Endothelial cell of umbilical vein (primary cell): ENCODE measurements at regions of chrX and their contacts with region 1.

Region 1: GRCh38 chrX:45749375-45749774 is 548.7 kb upstream of the DIPK2B start:
- DNase-seq: peak; percentile 43
- H3K4me3 ChIP-seq: no peak overlapping the region
- H3K27ac ChIP-seq: peak overlapping the region; percentile 26
- H3K4me1 ChIP-seq: peaks cover 45% of the 10 kb centered on the region
- H3K27me3 ChIP-seq: no peaks in the 10 kb centered on the region
- CTCF ChIP-seq: no peak
- POLR2A ChIP-seq: no peak

Region 2: DNA sequence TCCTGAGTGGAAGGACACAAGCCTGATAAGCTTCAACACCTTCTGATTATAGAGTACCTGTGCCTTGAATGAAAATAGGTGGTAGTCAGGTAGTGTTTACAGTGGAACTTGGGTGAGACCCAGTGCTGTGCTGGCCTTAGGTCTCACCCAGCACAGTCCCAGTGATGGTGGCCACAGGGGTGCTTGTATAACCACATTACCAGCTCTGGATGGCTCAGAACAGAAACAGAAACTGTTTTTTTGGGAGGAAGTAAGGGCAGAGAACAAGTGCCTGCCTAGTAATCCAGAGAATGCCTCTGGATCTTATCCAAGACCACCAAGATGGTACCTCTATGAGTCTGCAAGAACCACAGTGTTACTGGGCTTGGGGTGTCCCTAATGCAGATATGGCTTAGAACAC is 377.2 kb before region 1 on chrX:
- CTCF ChIA-PET with region 1: no interaction called
- POLR2A ChIA-PET with region 1: no interaction called
- dilution Hi-C with region 1: no loop called
- intact Hi-C with region 1: no loop called
- DNase-seq: no peak
- H3K4me3 ChIP-seq: no peak overlapping the region
- H3K27ac ChIP-seq: no peak overlapping the region
- H3K4me1 ChIP-seq: no peaks in the 10 kb centered on the region
- H3K27me3 ChIP-seq: no peaks in the 10 kb centered on the region
- CTCF ChIP-seq: no peak
- POLR2A ChIP-seq: no peak

Region 3: DNA sequence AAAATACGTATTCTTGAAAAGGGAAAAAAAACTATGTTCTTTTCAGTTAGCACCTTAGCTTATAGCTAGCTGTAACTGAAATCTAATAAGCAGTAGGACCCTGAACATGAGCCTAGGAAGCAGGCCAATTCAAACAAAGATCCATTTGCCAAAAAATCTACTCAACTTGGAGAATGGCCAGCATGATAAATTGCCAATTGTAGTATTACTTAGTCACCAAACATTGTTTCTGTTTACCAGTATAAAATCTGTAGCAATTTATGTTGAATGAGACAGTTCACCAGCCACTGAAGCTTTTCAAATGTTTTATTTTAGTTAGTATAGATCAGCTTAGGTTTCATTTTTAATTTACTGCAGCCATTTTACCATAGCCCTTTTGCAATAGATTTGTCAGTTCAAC is 225.1 kb before region 1 on chrX:
- CTCF ChIA-PET with region 1: no interaction called
- POLR2A ChIA-PET with region 1: no interaction called
- dilution Hi-C with region 1: no loop called
- intact Hi-C with region 1: loop called (anchors 1 kb)
- DNase-seq: peak; percentile 65
- H3K4me3 ChIP-seq: no peak overlapping the region
- H3K27ac ChIP-seq: no peak overlapping the region
- H3K4me1 ChIP-seq: peaks cover 4% of the 10 kb centered on the region
- H3K27me3 ChIP-seq: no peaks in the 10 kb centered on the region
- CTCF ChIP-seq: no peak
- POLR2A ChIP-seq: no peak

Region 4: DNA sequence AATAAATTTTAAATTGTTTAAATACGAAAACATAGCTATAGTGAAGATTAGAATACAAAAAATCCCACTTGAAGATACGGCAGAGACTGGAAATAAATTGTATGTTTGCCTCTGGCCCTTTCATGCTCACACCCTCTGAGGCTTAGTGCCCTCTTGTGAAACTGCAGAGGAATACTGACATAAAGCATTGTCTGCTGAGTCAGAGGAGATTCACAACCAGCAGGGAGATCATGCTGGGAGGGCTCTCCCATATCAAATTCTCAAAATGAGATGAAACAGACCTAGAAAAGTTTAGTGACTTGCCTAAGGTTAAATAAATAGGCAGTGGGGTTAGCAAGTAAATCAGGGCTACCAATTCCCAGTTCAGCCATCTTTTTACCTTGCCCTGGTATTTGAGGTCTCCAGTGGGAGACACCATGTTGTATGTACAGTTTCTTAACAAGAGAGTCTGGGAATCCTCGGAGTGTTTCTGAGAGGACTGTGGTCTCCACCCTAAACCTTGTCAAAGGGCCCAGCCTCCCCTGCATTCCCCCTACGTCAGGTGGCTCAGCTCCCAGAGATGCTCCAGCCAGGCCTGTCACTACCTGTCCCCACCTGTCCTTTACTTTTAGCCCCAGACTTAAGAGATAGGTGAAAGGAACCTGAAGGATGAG is 32.7 kb after region 1 on chrX:
- CTCF ChIA-PET with region 1: no interaction called
- POLR2A ChIA-PET with region 1: no interaction called
- dilution Hi-C with region 1: no loop called
- intact Hi-C with region 1: no loop called
- DNase-seq: peak; percentile 43
- H3K4me3 ChIP-seq: no peak overlapping the region
- H3K27ac ChIP-seq: no peak overlapping the region
- H3K4me1 ChIP-seq: peaks cover 8% of the 10 kb centered on the region
- H3K27me3 ChIP-seq: no peaks in the 10 kb centered on the region
- CTCF ChIP-seq: peak in 1 of 2 donors; percentile 3
- POLR2A ChIP-seq: no peak

Region 5: GRCh38 chrX:45879512-45879911 is 130.1 kb after region 1 on chrX:
- CTCF ChIA-PET with region 1: no interaction called
- POLR2A ChIA-PET with region 1: no interaction called
- dilution Hi-C with region 1: no loop called
- intact Hi-C with region 1: no loop called
- DNase-seq: no peak
- H3K4me3 ChIP-seq: no peak overlapping the region
- H3K27ac ChIP-seq: no peak overlapping the region
- H3K4me1 ChIP-seq: no peaks in the 10 kb centered on the region
- H3K27me3 ChIP-seq: peaks cover 0 to 1% of the 10 kb centered on the region in 2 experiments
- CTCF ChIP-seq: no peak
- POLR2A ChIP-seq: no peak